ENCODE measurements at regions of chr1 and their contacts with region 1.

Region 1: DNA sequence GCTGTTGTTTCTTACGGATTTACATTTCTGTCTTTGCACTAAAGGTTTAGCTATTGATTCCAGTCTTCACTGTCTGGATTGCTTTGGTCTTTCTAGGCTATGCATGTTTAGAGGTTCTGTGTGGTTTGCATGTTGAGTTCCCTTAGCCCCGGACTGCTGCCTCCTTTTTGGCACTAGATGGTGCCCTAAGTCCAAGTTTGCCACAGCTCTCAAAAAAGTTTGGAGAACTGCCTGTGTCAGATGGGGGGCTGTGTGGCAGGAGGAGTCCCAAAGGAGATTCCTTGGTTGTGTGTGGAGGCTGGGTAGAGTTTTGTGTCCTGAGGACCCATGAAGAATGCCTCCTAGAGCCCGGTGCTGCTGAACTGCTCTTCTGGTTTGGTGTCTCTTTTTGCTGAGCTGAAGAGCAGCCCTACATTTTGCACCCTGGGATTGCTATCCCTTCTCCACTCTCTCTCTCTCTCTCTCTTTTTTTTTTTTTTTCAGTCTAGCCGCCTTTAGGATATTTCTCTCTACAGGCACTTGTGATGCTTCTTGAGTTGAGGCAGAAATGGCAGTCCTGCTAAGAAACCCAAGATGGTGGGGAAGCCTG is 74.4 kb downstream of the PTGS2 start:
- DNase-seq: peak in 1 of 2 donors; percentile 27
- ATAC-seq: peak in 5 of 8 donors; percentile 48 to 83 (median 70)
- H3K4me3 ChIP-seq: no peak overlapping the region
- H3K27ac ChIP-seq: no peak overlapping the region
- H3K4me1 ChIP-seq: no peaks in the 10 kb centered on the region
- H3K27me3 ChIP-seq: no peaks in the 10 kb centered on the region
- CTCF ChIP-seq: peak; percentile 36 to 73 (median 67)

Region 2: DNA sequence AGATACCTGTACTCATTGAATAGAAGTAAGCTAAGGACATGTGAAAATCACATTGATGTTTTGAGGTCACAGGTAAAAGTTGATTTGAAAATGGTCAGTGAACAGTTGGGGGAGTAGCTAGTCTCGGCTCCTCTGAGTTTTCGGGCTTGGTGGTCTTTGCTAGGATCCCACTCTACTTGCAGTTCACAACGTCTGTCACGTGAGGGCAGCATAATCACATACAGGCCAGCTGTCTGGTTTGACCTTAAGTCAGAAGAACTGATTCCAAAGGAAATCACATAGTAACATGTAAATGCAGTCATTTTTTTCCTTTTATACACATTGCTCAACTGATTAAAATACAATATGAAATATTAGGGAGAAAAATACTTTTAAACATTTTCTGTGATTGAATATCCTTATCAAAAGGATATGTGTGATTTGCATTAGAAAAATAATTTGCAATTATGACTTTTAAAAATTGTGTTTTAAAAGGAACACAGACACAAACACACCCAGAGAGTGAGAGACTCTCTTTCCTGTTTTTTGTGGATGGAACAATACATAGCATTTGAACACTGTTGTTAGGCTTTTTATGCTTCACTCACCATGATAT is 123.1 kb before region 1 on chr1:
- intact Hi-C with region 1: loop called in 3 of 10 experiments (anchors 2 to 10 kb)
- DNase-seq: peak; percentile 25 to 30
- ATAC-seq: peak in 5 of 8 donors; percentile 33 to 68 (median 52)
- H3K4me3 ChIP-seq: no peak overlapping the region
- H3K27ac ChIP-seq: no peak overlapping the region
- H3K4me1 ChIP-seq: peaks cover 0 to 6% (median 0%) of the 10 kb centered on the region in 9 donors
- H3K27me3 ChIP-seq: no peaks in the 10 kb centered on the region
- CTCF ChIP-seq: peak; percentile 60 to 91 (median 82)

Region 3: DNA sequence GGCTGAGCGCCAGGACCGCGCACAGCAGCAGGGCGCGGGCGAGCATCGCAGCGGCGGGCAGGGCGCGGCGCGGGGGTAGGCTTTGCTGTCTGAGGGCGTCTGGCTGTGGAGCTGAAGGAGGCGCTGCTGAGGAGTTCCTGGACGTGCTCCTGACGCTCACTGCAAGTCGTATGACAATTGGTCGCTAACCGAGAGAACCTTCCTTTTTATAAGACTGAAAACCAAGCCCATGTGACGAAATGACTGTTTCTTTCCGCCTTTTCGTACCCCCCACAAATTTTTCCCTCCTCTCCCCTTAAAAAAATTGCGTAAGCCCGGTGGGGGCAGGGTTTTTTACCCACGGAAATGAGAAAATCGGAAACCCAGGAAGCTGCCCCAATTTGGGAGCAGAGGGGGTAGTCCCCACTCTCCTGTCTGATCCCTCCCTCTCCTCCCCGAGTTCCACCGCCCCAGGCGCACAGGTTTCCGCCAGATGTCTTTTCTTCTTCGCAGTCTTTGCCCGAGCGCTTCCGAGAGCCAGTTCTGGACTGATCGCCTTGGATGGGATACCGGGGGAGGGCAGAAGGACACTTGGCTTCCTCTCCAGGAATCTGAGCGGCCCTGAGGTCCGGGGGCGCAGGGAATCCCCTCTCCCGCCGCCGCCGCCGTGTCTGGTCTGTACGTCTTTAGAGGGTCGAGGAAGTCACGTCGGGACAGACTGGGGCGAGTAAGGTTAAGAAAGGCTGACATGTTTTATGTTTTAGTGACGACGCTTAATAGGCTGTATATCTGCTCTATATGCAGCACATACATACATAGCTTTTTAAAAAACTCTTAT is 74.6 kb after region 1 on chr1 and contains the start of gene PTGS2:
- intact Hi-C with region 1: loop called in 1 of 10 experiments (anchors 10 kb)
- DNase-seq: peak; percentile 63 to 73
- ATAC-seq: peak; percentile 91 to 97 (median 94)
- H3K4me3 ChIP-seq: peak within 1 kb of the TSS; percentile 41 to 67 (median 59)
- H3K27ac ChIP-seq: peak within 1 kb of the TSS; percentile 18 to 86 (median 80)
- H3K4me1 ChIP-seq: peaks cover 0 to 15% (median 0%) of the 10 kb centered on the region in 9 donors
- H3K27me3 ChIP-seq: peaks cover 0 to 21% (median 10%) of the 10 kb centered on the region in 7 donors
- CTCF ChIP-seq: peak in 6 of 9 donors; percentile 20 to 55 (median 46)
- total RNA-seq, gene PTGS2: 0.30 to 7.1 (median 1.8) TPM

Region 4: DNA sequence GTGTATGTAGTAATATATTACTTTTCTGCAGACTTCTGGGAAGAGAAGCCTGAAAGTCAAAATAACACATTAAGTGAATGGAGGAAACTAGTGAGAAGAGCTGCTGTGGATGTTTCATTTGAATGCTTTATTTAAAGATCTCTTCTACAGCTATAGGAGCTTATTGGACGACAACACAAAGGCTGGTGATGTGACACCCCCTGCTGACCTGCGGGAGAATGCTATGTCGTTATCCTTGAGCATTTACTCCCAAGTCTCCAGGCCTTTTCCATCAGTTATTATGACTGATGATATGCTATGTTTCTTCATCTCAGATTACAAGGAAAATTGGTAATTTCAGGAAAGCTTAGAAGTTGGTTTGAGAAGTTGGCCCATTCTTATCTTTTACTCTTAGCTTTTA is 200.6 kb after region 1 on chr1:
- intact Hi-C with region 1: loop called in 1 of 10 experiments (anchors 10 kb)
- DNase-seq: peak in 1 of 2 donors; percentile 6
- ATAC-seq: no peak
- H3K4me3 ChIP-seq: no peak overlapping the region
- H3K27ac ChIP-seq: no peak overlapping the region
- H3K4me1 ChIP-seq: no peaks in the 10 kb centered on the region
- H3K27me3 ChIP-seq: no peaks in the 10 kb centered on the region
- CTCF ChIP-seq: peak in 6 of 9 donors; percentile 11 to 36 (median 20)